Naive thymus-derived CD4-positive, alpha-beta T cell (primary cell): ENCODE measurements at regions of chr18 and their contacts with region 1.

Region 1: DNA sequence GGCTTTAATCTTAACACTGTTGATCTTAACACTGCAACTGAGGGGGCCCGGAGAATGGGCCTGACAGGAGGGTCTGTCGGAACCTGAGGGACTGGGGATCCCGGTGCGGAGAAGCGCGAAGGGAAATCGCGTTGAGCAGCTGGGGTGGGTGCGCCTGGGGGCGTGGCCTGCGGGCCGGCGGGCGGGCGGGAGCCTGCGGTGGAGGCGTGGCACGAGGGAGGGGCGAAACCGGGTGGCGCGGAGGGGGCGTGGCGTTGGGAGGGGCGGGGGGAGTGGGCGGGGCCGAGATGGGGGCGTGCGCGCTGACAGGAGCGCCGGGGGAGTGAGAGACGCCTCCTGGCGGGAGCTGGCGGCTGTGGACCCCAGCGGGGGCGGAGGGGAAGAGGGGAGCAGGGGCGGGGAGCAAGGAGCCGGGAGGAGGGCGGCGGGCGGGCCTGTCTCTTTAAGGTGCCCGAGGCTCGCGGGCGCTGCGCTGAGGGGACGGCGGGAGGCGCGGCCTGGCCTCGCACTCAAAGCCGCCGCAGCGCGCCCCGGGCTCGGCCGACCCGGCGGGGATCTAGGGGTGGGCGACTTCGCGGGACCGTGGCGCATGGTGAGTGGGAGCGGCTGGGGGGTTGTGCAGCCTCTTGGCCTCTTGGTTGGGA is at the start of gene TWSG1:
- DNase-seq: peak; percentile 86 to 94 (median 90)
- ATAC-seq: peak; percentile 94
- H3K4me3 ChIP-seq: peak within 1 kb of the TSS; percentile 90
- H3K4me3 Mint-ChIP-seq: peak within 1 kb of the TSS; percentile 86 to 94 (median 92)
- H3K27ac ChIP-seq: peak within 1 kb of the TSS; percentile 74
- H3K27ac Mint-ChIP-seq: peak within 1 kb of the TSS; percentile 63 to 97 (median 88)
- H3K4me1 ChIP-seq: peaks cover 0 to 8% of the 10 kb centered on the region in 2 donors
- H3K4me1 Mint-ChIP-seq: peaks cover 1 to 33% (median 24%) of the 10 kb centered on the region in 7 donors
- H3K27me3 ChIP-seq: no peaks in the 10 kb centered on the region
- H3K27me3 Mint-ChIP-seq: peaks cover 0 to 35% (median 0%) of the 10 kb centered on the region in 5 donors
- total RNA-seq, gene TWSG1: 2.4 to 7.6 (median 5.8) TPM

Region 2: DNA sequence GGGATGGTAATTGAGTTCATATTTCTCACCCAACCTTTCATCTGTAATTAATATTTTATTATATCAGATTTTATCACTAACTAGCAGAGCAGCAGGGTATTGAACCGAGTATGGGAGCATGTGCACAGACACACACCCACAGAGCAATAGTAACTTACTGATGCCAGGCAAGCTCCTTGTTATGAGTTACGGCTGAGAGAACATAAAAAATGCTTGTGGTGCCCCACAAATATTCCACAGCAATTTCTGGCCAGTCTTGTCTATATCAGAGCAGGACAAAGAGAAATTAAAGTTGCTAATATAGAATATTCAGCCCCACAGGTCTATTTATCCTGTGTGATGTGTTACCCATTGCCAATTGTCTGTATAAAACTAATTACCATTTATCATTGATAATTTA is 1227.0 kb before region 1 on chr18:
- CTCF ChIA-PET with region 1: no interaction called
- POLR2A ChIA-PET with region 1: no interaction called
- intact Hi-C with region 1: no loop called
- DNase-seq: no peak
- ATAC-seq: no peak
- H3K4me3 ChIP-seq: no peak overlapping the region
- H3K4me3 Mint-ChIP-seq: no peak overlapping the region
- H3K27ac ChIP-seq: no peak overlapping the region
- H3K27ac Mint-ChIP-seq: no peak overlapping the region
- H3K4me1 ChIP-seq: no peaks in the 10 kb centered on the region
- H3K4me1 Mint-ChIP-seq: no peaks in the 10 kb centered on the region
- H3K27me3 ChIP-seq: no peaks in the 10 kb centered on the region
- H3K27me3 Mint-ChIP-seq: peaks cover 0 to 4% (median 0%) of the 10 kb centered on the region in 5 donors

Region 3: DNA sequence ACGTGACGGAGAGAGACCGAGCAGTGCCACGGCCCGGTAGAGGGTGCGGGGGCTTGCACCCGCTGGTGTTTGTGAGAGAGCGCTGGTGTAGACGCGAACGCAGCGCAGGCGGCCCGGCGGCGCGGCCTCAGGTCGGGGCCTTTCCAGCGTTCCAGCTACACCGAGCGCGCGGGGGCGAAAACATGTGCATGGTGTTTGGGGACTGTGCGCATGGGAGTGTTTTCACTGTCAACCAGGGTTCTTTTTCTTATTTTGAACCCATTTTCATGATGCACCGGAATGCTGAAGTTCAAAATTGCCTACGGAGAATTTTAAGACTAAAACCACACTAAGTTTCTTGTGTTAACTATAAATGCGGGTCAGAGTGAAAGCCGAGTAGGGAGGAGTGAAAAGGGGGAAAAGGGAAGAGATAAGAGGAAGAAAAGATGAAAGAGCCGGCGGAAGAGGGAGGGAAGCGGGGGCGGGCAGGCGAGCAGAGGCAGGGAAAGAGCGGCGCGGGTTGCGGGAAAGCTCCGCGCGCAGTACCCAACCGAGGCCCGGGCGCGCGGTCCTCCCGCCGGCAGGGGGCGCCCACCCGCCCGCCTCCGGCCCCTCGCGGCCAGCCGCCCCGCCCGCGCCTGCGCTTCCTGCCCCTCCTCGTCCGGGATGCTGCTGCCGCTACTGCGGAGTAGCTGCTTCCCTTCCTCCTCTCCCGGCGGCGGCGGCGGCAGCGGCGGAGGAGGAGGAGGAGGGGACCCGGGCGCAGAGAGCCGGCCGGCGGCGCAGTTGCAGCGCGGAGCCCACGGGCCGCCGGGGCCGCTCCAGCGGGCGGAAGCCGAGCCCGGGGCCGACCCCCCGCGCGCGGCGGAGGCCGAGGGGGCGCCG is 725.4 kb before region 1 on chr18 and contains the start of gene RAB12:
- CTCF ChIA-PET with region 1: no interaction called
- POLR2A ChIA-PET with region 1: no interaction called
- intact Hi-C with region 1: loop called (anchors 2 to 5 kb)
- DNase-seq: peak; percentile 76 to 93 (median 87)
- ATAC-seq: peak; percentile 97
- H3K4me3 ChIP-seq: peak within 1 kb of the TSS; percentile 78
- H3K4me3 Mint-ChIP-seq: peak within 1 kb of the TSS; percentile 88 to 97 (median 94)
- H3K27ac ChIP-seq: peak within 1 kb of the TSS; percentile 76
- H3K27ac Mint-ChIP-seq: peak within 1 kb of the TSS; percentile 91 to 99 (median 96)
- H3K4me1 ChIP-seq: peaks cover 18 to 29% of the 10 kb centered on the region in 2 donors
- H3K4me1 Mint-ChIP-seq: peaks cover 42 to 63% (median 56%) of the 10 kb centered on the region in 7 donors
- H3K27me3 ChIP-seq: no peaks in the 10 kb centered on the region
- H3K27me3 Mint-ChIP-seq: peaks cover 0 to 16% (median 7%) of the 10 kb centered on the region in 5 donors
- total RNA-seq, gene RAB12: 19.8 to 26.2 (median 23.0) TPM

Region 4: DNA sequence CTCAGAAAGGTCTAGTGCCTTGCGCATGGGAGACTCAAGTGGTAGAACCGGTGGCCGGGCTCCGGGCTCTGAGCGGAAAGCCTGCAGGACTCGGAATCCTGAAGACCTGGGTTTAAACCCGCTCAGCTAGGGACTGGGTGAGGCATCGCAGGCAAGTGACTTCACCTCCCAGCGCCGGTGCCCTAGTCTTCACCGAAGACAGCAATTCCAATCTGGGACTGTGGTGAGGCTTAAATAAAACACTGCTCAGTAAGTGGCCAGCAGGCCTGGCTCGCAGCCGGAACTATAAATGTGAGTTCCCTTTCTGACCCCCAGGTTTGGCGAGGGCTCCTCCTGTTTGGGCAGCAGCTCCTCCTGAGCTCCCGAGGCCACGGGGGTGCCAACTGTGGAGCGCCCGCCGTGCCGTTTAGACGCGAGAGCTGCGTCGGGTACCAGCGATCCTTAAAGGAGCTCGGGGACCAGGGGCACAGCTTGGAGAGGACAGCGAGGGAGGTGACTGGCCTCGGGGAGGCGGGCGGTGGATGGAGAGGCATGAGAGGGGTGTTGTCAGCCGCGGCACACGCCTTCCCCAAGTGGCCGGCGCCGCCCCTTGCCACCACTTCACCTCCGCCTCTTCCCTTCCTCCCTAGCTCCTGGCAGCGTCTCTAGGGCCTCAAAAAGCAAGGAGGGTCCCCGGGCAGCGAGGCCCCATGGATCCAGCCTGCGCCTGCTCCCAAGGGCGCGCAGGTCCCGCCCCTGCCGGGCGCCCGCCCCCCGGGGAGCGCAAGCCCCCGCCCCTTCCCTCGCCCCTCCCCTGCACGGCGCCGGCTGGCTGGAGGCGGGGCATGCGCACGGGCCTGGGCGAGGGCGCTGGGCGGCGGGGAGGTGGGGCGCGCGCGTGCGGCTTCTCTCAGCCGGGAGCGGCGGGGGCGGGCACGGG is 629.8 kb before region 1 on chr18:
- CTCF ChIA-PET with region 1: no interaction called
- POLR2A ChIA-PET with region 1: no interaction called
- intact Hi-C with region 1: loop called (anchors 1 to 2 kb)
- DNase-seq: peak; percentile 65 to 92 (median 75)
- ATAC-seq: peak; percentile 96
- H3K4me3 ChIP-seq: peak overlapping the region; percentile 75
- H3K4me3 Mint-ChIP-seq: peak overlapping the region; percentile 83 to 96 (median 90)
- H3K27ac ChIP-seq: peak overlapping the region; percentile 25
- H3K27ac Mint-ChIP-seq: peak overlapping the region in 4 of 9 donors; percentile 4 to 67 (median 48)
- H3K4me1 ChIP-seq: peaks cover 6 to 21% of the 10 kb centered on the region in 2 donors
- H3K4me1 Mint-ChIP-seq: peaks cover 13 to 29% (median 17%) of the 10 kb centered on the region in 7 donors
- H3K27me3 ChIP-seq: peaks cover 5 to 19% of the 10 kb centered on the region in 2 donors
- H3K27me3 Mint-ChIP-seq: peaks cover 60 to 78% (median 68%) of the 10 kb centered on the region in 5 donors

Region 5: GRCh38 chr18:8754995-8755955 is 579.2 kb before region 1 on chr18:
- CTCF ChIA-PET with region 1: no interaction called
- POLR2A ChIA-PET with region 1: no interaction called
- intact Hi-C with region 1: loop called in 1 of 2 experiments (anchors 5 kb)
- DNase-seq: peak in 7 of 9 donors; percentile 78 to 90 (median 89)
- ATAC-seq: peak; percentile 97
- H3K4me3 ChIP-seq: peak overlapping the region; percentile 4
- H3K4me3 Mint-ChIP-seq: peak overlapping the region; percentile 68 to 94 (median 79)
- H3K27ac ChIP-seq: no peak overlapping the region
- H3K27ac Mint-ChIP-seq: peak overlapping the region in 8 of 9 donors; percentile 21 to 88 (median 71)
- H3K4me1 ChIP-seq: peaks cover 15 to 23% of the 10 kb centered on the region in 2 donors
- H3K4me1 Mint-ChIP-seq: peaks cover 17 to 39% (median 31%) of the 10 kb centered on the region in 7 donors
- H3K27me3 ChIP-seq: no peaks in the 10 kb centered on the region
- H3K27me3 Mint-ChIP-seq: peaks cover 0 to 18% (median 8%) of the 10 kb centered on the region in 5 donors

Region 6: DNA sequence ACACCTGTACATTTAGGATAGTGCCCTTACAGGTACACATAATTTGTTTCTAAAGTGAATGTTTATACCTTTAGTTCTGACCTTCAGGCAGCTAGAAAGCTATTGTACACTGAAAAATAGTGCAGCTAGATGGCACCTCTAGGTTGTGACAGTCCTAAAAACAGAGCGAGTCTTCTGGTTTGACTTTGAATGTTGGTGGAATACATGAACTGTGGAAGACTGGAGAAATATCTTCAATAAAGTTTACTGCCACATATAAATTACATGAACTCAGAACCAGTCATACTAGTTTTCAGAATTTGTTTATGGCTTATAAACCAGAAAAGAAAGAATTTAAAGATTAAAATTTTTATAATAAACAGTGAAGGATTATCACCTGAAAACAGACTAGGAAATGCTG is 58.6 kb before region 1 on chr18:
- CTCF ChIA-PET with region 1: no interaction called
- POLR2A ChIA-PET with region 1: no interaction called
- intact Hi-C with region 1: loop called in 1 of 2 experiments (anchors 2 kb)
- DNase-seq: no peak
- ATAC-seq: no peak
- H3K4me3 ChIP-seq: no peak overlapping the region
- H3K4me3 Mint-ChIP-seq: no peak overlapping the region
- H3K27ac ChIP-seq: no peak overlapping the region
- H3K27ac Mint-ChIP-seq: peak overlapping the region in 3 of 9 donors; percentile 8 to 19 (median 14)
- H3K4me1 ChIP-seq: no peaks in the 10 kb centered on the region
- H3K4me1 Mint-ChIP-seq: peaks cover 0 to under 1% (median 0%) of the 10 kb centered on the region in 7 donors
- H3K27me3 ChIP-seq: no peaks in the 10 kb centered on the region
- H3K27me3 Mint-ChIP-seq: no peaks in the 10 kb centered on the region

Region 7: DNA sequence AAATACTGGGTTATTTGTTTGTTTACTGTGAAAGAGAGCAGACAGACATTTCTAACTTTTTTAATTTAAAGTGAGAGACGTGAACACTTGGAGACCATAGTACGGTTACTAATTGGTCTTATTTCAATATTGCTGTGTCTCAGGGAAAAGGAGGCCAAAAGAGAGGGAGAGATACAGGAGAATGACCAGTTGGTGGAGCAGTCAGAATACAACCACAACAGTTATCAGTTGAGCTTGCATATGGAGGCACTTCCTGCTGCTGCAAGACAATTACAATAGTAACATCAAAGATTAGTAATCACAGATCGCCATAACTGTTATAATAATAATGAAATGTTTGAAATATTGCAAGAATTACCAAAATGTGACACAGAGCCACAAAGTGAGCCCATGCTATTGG is 58.3 kb after region 1 on chr18:
- CTCF ChIA-PET with region 1: no interaction called
- POLR2A ChIA-PET with region 1: no interaction called
- intact Hi-C with region 1: no loop called
- DNase-seq: no peak
- ATAC-seq: no peak
- H3K4me3 ChIP-seq: no peak overlapping the region
- H3K4me3 Mint-ChIP-seq: no peak overlapping the region
- H3K27ac ChIP-seq: no peak overlapping the region
- H3K27ac Mint-ChIP-seq: no peak overlapping the region
- H3K4me1 ChIP-seq: no peaks in the 10 kb centered on the region
- H3K4me1 Mint-ChIP-seq: no peaks in the 10 kb centered on the region
- H3K27me3 ChIP-seq: no peaks in the 10 kb centered on the region
- H3K27me3 Mint-ChIP-seq: no peaks in the 10 kb centered on the region

Region 8: GRCh38 chr18:9417073-9417841 is 82.8 kb after region 1 on chr18:
- CTCF ChIA-PET with region 1: no interaction called
- POLR2A ChIA-PET with region 1: no interaction called
- intact Hi-C with region 1: no loop called
- DNase-seq: no peak
- ATAC-seq: no peak
- H3K4me3 ChIP-seq: no peak overlapping the region
- H3K4me3 Mint-ChIP-seq: no peak overlapping the region
- H3K27ac ChIP-seq: no peak overlapping the region
- H3K27ac Mint-ChIP-seq: no peak overlapping the region
- H3K4me1 ChIP-seq: no peaks in the 10 kb centered on the region
- H3K4me1 Mint-ChIP-seq: no peaks in the 10 kb centered on the region
- H3K27me3 ChIP-seq: no peaks in the 10 kb centered on the region
- H3K27me3 Mint-ChIP-seq: peaks cover 0 to 1% (median 0%) of the 10 kb centered on the region in 5 donors

Region 9: GRCh38 chr18:9474983-9475642 is 140.7 kb after region 1 on chr18 and contains the start of gene RALBP1:
- CTCF ChIA-PET with region 1: no interaction called
- POLR2A ChIA-PET with region 1: no interaction called
- intact Hi-C with region 1: loop called (anchors 1 kb)
- DNase-seq: peak; percentile 92 to 98 (median 96)
- ATAC-seq: peak; percentile 99
- H3K4me3 ChIP-seq: peak within 1 kb of the TSS; percentile 88
- H3K4me3 Mint-ChIP-seq: peak within 1 kb of the TSS; percentile 84 to 99 (median 97)
- H3K27ac ChIP-seq: peak within 1 kb of the TSS; percentile 81
- H3K27ac Mint-ChIP-seq: peak within 1 kb of the TSS; percentile 82 to 97 (median 94)
- H3K4me1 ChIP-seq: peaks cover 0 to 14% of the 10 kb centered on the region in 2 donors
- H3K4me1 Mint-ChIP-seq: peaks cover 21 to 41% (median 30%) of the 10 kb centered on the region in 7 donors
- H3K27me3 ChIP-seq: no peaks in the 10 kb centered on the region
- H3K27me3 Mint-ChIP-seq: peaks cover 0 to 24% (median 5%) of the 10 kb centered on the region in 5 donors
- total RNA-seq, gene RALBP1: 20.3 to 47.8 (median 42.2) TPM